ENCODE measurements at regions of chr1 and their contacts with region 1.

Region 1: DNA sequence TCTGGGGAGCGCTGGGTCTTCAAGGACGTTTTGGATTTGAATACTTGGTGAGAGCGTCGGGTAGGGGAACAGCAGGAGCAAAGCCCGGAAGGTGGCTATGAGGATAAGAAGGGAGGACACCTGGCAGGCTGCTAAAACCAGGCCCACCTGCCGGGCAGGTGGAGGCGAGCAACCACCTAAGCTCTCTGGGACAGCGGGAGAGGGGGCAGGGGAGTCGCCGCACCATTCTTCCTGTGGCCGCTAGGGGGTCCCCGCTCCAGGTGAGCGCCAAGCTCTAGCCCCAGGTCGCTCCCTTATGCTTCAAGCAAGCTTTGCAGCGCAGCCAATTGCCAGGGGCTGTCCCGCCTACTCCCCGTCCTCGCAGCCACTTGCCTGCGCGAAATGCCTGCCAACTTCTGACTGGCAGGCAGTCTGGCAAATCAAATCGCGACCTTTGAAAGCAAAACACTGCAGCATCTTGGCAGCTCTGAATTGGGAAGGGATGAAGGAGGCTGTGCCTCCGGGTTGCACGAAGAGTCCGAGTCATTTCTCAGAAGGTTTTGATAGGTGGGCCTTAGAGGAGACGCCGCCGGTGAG is at the start of gene NIPAL3:
- DNase-seq: peak; percentile 99
- H3K4me3 Mint-ChIP-seq: peak within 1 kb of the TSS; percentile 98
- H3K27ac Mint-ChIP-seq: peak within 1 kb of the TSS; percentile 77
- H3K4me1 Mint-ChIP-seq: peaks cover 61% of the 10 kb centered on the region
- H3K27me3 Mint-ChIP-seq: no peaks in the 10 kb centered on the region
- total RNA-seq, gene NIPAL3: 51.8 to 53.5 TPM

Region 2: GRCh38 chr1:24186993-24187805 is 228.2 kb before region 1 on chr1 and contains the start of gene IFNLR1:
- CTCF ChIA-PET with region 1: interaction called, 15 read pairs
- POLR2A ChIA-PET with region 1: interaction called, 6 read pairs
- DNase-seq: peak; percentile 79
- H3K4me3 Mint-ChIP-seq: peak within 1 kb of the TSS; percentile 79
- H3K27ac Mint-ChIP-seq: peak within 1 kb of the TSS; percentile 38
- H3K4me1 Mint-ChIP-seq: peaks cover 50% of the 10 kb centered on the region
- H3K27me3 Mint-ChIP-seq: peaks cover 2% of the 10 kb centered on the region
- total RNA-seq, gene IFNLR1: 6.0 to 6.1 TPM

Region 3: GRCh38 chr1:24391882-24392603 is 23.4 kb before region 1 on chr1:
- CTCF ChIA-PET with region 1: interaction called, 50 read pairs
- POLR2A ChIA-PET with region 1: interaction called, 6 read pairs
- DNase-seq: peak; percentile 74
- H3K4me3 Mint-ChIP-seq: peak overlapping the region; percentile 77
- H3K27ac Mint-ChIP-seq: peak overlapping the region; percentile 90
- H3K4me1 Mint-ChIP-seq: peaks cover 25% of the 10 kb centered on the region
- H3K27me3 Mint-ChIP-seq: no peaks in the 10 kb centered on the region

Region 4: DNA sequence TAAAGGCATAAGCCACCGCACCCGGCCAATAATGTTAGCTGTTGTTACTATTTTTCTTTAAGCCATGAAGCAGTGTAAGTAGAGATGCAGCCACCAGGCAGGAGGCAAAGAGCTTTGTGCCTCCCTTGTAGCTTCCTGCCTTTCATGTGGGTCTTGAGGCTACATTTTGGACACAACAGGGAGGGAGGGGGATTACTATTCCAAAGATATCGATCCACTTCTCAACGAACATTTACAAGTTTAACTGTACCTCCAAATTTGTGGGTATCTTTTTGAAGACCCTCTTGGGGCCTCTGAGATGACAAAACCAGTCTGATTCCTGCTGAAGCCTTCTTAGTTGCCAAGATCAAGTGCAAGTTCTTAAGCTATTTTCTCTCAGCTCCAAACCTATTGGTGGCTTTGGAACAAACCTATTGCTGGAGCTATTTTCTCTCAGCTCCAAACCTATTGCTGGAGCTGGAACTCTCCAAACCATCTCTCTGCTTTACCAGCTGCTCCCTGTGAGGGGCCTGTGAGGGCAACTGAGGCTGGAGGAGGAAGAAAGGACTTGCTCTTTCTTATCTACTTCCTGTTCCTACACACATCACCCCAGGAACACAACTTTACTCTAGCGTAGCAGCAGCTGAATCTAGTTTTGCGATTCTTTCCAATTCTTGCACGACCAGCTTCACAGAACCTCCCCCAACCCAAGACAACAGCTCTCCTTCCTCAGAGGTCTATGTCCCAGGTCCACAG is 71.1 kb after region 1 on chr1:
- CTCF ChIA-PET with region 1: interaction called, 19 read pairs
- POLR2A ChIA-PET with region 1: interaction called, 95 read pairs
- DNase-seq: no peak
- H3K4me3 Mint-ChIP-seq: peak overlapping the region; percentile 36
- H3K27ac Mint-ChIP-seq: peak overlapping the region; percentile 82
- H3K4me1 Mint-ChIP-seq: peaks cover 59% of the 10 kb centered on the region
- H3K27me3 Mint-ChIP-seq: no peaks in the 10 kb centered on the region

Region 5: GRCh38 chr1:24536391-24536840 is 121.0 kb after region 1 on chr1:
- CTCF ChIA-PET with region 1: interaction called, 28 read pairs
- POLR2A ChIA-PET with region 1: interaction called, 32 read pairs
- DNase-seq: peak; percentile 75
- H3K4me3 Mint-ChIP-seq: peak overlapping the region; percentile 73
- H3K27ac Mint-ChIP-seq: peak overlapping the region; percentile 98
- H3K4me1 Mint-ChIP-seq: peaks cover 74% of the 10 kb centered on the region
- H3K27me3 Mint-ChIP-seq: no peaks in the 10 kb centered on the region

Region 6: GRCh38 chr1:24642481-24643361 is 227.3 kb after region 1 on chr1 and contains the start of gene SRRM1:
- CTCF ChIA-PET with region 1: interaction called, 17 read pairs
- POLR2A ChIA-PET with region 1: interaction called, 5 read pairs
- DNase-seq: peak; percentile 99
- H3K4me3 Mint-ChIP-seq: peak within 1 kb of the TSS; percentile 88
- H3K27ac Mint-ChIP-seq: peak within 1 kb of the TSS; percentile 96
- H3K4me1 Mint-ChIP-seq: peaks cover 48% of the 10 kb centered on the region
- H3K27me3 Mint-ChIP-seq: peaks cover under 1% of the 10 kb centered on the region
- total RNA-seq, gene SRRM1: 172 to 183 TPM

Measured in activated CD4-positive, alpha-beta memory T cell treated with anti-CD3 and anti-CD28 coated beads, Interleukin-2, amount 10 ng/mL, durations not matched to agents 7 days and 5 days (primary cell).